Activated CD4-positive, alpha-beta T cell treated with anti-CD3 and anti-CD28 coated beads for 36 hours (primary cell): ENCODE measurements at regions of chr10 and their contacts with region 1.

Region 1: DNA sequence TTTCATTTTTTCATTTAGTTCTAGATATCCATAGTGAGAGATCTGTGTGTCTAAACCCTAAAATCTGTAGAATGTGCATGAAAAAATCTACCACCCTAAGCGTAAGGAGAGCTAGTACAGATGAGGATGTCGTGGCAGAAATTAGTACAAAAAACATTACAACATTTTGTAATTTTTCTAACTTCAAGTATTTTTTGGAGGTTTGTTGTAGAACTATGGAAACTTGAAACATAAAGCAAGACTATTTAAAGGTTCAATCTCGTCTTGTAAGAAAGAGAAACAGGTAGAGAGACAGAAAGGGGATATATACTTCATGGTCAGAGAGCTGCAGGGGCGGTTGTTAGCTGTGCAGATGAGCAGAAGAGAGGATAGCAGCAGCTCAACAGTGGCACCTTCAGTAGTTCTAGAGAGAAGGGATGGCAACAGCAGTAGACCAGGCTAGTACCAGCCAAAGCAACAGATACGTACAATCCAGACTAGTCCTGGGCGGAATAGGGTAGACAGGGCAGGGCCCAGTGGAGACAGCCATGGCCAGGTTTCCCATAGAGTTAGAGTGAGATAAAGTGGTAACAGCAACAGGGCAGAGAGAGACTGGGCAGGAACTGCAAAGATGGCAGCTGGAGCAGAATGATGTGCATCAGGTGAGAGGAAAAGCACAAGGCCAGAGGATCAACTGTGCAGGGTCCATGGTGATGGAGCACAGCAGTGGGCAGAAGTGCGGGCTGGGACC is 145.2 kb downstream of the FRMD4A start:
- DNase-seq: peak; percentile 73
- ATAC-seq: peak; percentile 92
- H3K4me3 Mint-ChIP-seq: peak overlapping the region; percentile 63
- H3K27ac Mint-ChIP-seq: peak overlapping the region; percentile 97
- H3K4me1 Mint-ChIP-seq: peaks cover 31% of the 10 kb centered on the region
- H3K27me3 Mint-ChIP-seq: peaks cover 29% of the 10 kb centered on the region

Region 2: DNA sequence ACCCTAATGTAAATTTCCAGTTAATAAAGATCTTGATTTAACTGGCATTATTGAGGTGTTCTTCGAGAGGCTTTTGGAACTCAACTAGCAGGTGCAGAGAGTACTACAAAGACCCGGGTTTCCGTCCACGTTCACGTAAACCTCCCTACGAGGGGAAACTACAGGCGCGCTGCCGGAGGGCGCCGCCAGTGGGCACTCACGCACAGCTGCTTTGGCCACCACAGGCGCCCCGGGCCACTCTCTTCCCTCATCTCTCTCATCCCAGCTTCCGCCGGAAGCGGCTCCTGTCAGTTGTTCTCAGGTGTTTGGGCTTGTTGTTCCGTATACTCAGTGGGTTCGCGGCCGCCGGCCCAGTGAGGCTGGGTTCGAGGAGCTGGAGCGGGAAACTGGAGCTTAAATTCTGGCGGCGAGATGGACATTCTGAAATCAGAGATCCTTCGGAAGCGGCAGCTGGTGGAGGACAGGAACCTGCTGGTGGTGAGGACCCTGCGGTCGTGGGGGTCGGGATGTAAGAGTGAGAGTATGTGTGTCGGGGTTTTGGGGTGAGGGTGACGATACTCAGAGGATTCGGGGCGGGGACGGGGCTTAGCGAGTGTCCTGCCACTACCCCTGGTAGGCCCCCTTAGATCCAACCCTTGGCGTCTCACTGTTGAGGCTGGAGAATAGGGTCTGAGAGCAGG is 598.7 kb before region 1 on chr10 and contains the start of gene PRPF18:
- CTCF ChIA-PET with region 1: no interaction called
- POLR2A ChIA-PET with region 1: interaction called, 3 read pairs
- intact Hi-C with region 1: loop called in 1 of 2 experiments (anchors 10 kb)
- DNase-seq: peak; percentile 97
- ATAC-seq: peak; percentile 100
- H3K4me3 Mint-ChIP-seq: peak within 1 kb of the TSS; percentile 99
- H3K27ac Mint-ChIP-seq: peak within 1 kb of the TSS; percentile 95
- H3K4me1 Mint-ChIP-seq: peaks cover 29% of the 10 kb centered on the region
- H3K27me3 Mint-ChIP-seq: peaks cover 8% of the 10 kb centered on the region
- total RNA-seq, gene PRPF18: 21.0 to 22.1 TPM

Region 3: GRCh38 chr10:13865758-13866491 is 319.6 kb before region 1 on chr10:
- CTCF ChIA-PET with region 1: no interaction called
- POLR2A ChIA-PET with region 1: no interaction called
- intact Hi-C with region 1: no loop called
- DNase-seq: no peak
- ATAC-seq: no peak
- H3K4me3 Mint-ChIP-seq: no peak overlapping the region
- H3K27ac Mint-ChIP-seq: no peak overlapping the region
- H3K4me1 Mint-ChIP-seq: peaks cover 26% of the 10 kb centered on the region
- H3K27me3 Mint-ChIP-seq: no peaks in the 10 kb centered on the region

Region 4: GRCh38 chr10:14040787-14041631 is 144.5 kb before region 1 on chr10:
- CTCF ChIA-PET with region 1: no interaction called
- POLR2A ChIA-PET with region 1: interaction called, 10 read pairs
- intact Hi-C with region 1: no loop called
- DNase-seq: no peak
- ATAC-seq: peak; percentile 51
- H3K4me3 Mint-ChIP-seq: no peak overlapping the region
- H3K27ac Mint-ChIP-seq: no peak overlapping the region
- H3K4me1 Mint-ChIP-seq: peaks cover 11% of the 10 kb centered on the region
- H3K27me3 Mint-ChIP-seq: no peaks in the 10 kb centered on the region

Region 5: DNA sequence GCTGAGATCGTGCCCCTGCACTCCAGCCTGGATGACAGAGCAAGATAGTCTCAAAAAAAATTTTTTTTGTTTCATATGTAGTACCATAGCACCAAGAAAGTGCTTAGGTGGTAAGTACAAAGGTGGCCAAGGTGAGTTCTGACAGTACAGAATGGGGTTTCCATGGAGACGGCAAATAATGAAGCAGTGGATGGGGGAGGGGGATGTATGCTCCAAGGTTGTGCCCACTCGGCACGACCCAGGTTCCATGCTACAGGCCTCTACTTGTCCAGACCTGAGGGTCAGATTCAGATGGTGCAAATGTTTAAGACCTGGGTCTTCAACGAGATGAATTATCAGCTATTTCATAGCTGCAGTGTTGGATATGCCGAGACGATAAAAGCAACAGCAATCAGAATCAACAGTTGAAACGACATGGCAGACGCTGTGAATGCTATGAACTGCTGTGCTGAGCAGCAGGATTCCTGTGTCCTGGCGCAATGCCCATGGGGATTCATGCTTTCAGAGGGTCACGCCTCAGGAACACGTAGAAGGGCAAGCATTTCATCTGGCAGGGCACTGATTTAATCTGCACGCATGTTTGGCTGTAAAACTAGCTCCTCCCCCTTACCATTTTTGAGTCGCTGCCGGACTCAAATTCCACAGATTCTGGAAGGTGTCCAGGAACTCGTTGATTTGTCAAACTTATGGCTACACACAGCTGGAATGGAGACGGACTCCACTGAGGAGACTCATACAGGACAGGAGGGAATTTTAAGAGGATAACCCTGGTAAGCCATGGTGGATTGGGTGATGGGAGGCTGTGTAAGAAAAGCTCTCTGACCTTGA is 111.2 kb before region 1 on chr10:
- CTCF ChIA-PET with region 1: no interaction called
- POLR2A ChIA-PET with region 1: no interaction called
- intact Hi-C with region 1: no loop called
- DNase-seq: no peak
- ATAC-seq: no peak
- H3K4me3 Mint-ChIP-seq: no peak overlapping the region
- H3K27ac Mint-ChIP-seq: no peak overlapping the region
- H3K4me1 Mint-ChIP-seq: no peaks in the 10 kb centered on the region
- H3K27me3 Mint-ChIP-seq: no peaks in the 10 kb centered on the region

Region 6: DNA sequence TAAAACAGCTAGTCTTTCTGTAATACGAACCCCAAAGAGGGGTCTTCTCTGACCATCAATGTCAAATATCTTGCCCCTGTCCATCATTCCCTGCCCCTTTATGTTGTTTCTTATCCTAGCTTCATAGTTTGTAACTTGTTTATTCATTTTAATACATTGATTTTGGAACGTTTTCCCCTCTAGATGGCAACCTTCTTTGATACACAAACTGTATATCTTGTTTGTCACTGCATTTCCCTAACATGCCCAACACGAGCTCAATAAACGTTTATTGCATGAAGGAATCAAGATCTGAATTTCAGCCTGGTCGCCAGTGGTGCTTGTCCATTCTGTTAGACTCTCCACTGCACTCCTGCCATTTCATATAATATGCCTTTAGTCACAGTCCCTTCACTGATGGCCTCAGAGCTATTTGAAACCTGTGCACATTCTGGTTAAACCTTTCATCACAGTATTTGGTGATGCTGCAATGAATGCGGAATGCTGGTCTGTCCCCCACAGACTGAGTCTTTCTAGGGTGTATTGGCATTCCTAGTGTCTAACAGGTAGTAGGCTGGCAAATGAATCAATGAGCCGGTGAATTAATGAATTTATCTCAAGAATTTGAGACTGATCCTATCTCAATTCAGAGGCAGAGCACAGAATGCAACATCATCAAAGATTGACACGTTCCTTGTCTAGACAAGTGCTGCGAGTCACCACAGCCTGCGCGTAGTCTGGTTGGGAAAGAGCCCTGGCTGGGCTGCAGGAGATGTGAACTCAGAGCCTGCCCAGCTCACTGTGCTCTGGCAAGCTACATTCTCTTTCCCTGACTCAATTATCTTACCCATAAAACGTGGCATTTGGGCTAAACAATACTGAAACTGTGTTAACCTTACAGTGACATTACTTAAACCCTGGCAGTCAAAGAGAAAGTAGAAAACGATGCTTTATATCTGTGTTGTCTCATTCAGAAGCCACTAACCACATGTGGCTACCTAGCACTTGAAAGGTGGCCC is 200.4 kb after region 1 on chr10:
- CTCF ChIA-PET with region 1: no interaction called
- POLR2A ChIA-PET with region 1: interaction called, 9 read pairs
- intact Hi-C with region 1: loop called (anchors 1 kb)
- DNase-seq: peak; percentile 78
- ATAC-seq: peak; percentile 74
- H3K4me3 Mint-ChIP-seq: no peak overlapping the region
- H3K27ac Mint-ChIP-seq: no peak overlapping the region
- H3K4me1 Mint-ChIP-seq: peaks cover 74% of the 10 kb centered on the region
- H3K27me3 Mint-ChIP-seq: peaks cover 13% of the 10 kb centered on the region

Region 7: DNA sequence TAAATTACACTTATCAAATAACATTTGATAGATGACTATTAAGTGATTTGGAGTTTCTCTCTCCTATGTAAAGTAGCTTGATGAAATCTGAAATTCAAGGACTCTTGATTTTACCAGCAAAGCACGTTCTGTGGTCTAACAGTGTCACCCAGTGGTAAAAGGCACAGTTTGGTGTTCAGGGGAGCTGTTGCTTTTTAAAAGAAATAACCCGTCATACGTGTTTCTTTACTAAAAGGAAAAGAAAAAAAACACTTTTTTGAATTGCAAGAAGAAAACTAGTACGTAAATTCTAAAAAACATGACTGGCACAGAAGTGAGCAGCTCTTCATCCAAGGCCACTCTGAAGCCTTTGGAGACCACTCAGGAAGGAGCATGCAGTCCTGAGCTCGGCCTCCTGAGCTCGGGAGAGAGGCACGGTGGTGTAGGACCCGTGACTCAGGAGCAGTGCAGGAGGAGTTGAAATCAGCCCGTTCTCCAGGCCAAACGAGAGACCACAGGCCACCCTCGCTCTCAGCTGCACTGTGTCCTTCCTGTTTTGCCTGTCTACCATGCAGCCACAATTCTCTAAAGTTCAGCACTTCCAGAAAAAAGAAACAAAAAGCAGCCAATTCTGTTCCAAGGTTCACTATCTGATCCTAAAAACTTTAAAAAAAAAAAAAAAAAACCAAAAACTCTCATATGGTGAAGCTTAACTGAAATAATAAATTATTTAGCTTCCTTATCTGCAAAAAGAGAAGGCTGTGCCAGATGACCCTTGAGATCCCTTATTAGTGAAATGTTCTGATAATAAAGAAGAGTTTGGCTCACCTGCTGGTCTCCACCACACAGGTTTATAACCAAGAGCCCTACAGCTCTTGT is 357.8 kb after region 1 on chr10:
- CTCF ChIA-PET with region 1: no interaction called
- POLR2A ChIA-PET with region 1: interaction called, 12 read pairs
- intact Hi-C with region 1: no loop called
- DNase-seq: peak; percentile 60
- ATAC-seq: peak; percentile 81
- H3K4me3 Mint-ChIP-seq: peak overlapping the region; percentile 62
- H3K27ac Mint-ChIP-seq: peak overlapping the region; percentile 90
- H3K4me1 Mint-ChIP-seq: peaks cover 79% of the 10 kb centered on the region
- H3K27me3 Mint-ChIP-seq: no peaks in the 10 kb centered on the region

Region 8: DNA sequence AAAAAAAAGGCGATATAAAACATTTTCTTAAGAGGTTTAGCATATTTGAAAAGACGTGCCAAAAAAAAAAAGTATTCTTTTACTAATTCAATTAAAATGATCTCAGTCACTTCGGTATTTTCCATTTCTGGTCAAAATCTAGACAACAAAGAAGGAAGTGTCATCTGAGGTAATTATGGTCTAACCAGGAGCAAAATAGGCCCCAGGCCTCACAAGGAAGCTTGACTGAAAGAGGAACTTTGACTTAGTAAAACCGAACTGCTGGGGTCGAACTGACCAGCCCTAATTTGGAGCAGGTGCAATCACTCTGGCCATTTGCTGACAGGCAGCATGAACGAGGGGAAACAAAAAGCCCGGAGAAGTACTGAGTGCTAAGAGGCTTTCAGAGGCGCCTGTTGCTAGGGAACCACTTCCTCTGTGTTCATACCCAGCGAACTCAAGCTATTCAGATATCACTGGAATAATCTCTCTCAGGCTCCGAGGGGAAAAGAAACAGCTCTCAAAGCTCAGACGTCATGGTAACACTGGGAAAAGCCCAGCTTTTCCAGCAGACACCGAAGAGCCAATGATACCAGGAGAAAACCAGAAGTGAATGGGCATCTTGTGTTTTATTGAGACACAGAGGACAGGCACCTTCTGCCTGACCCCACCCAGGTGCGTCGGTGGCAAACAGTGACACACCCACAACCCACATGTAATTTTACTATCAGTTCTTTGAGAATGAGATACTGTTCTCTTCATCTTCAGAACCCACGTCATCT is 462.7 kb after region 1 on chr10:
- CTCF ChIA-PET with region 1: no interaction called
- POLR2A ChIA-PET with region 1: interaction called, 10 read pairs
- intact Hi-C with region 1: loop called (anchors 1 to 2 kb)
- DNase-seq: peak; percentile 79
- ATAC-seq: peak; percentile 66
- H3K4me3 Mint-ChIP-seq: peak overlapping the region; percentile 65
- H3K27ac Mint-ChIP-seq: peak overlapping the region; percentile 98
- H3K4me1 Mint-ChIP-seq: peaks cover 85% of the 10 kb centered on the region
- H3K27me3 Mint-ChIP-seq: no peaks in the 10 kb centered on the region

Region 9: DNA sequence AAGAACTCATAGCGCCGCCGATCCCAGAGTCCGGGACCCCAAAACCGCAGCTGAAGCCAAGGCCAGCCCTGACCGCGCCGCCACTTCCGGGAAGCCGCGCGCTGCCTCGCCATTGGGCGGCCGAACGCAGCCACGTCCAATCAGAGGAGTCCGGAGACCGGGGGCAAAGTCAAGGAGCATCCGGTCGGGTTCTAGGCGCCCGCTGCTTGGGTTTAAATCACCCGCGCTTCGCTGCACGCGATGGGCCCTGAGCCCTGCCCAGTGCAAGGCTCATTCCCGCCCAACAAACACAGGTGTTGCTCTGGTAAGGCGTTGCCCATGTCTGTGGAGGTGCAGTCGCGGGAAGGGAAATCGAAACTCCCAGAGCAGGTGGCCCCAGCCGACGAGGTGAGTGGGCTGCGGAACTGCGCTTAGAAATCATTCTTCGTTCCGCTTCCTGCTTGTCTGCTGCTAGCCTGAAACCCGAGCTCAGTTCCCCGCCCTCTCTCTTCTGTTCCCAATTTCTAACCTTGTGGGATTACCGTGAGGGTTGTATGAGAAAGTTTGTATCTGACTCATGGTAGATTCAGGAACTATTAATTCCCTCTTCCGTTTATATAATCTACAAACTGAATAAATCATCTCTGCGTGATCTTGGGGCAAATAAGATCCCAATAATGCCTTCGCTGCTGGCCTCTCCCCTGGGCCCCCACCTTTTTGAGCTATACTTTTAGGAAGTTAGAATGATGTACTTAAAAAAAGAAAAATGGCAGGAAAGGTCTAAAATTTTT is 768.7 kb after region 1 on chr10 and contains the start of gene DCLRE1C:
- CTCF ChIA-PET with region 1: no interaction called
- POLR2A ChIA-PET with region 1: interaction called, 12 read pairs
- intact Hi-C with region 1: loop called in 1 of 2 experiments (anchors 10 kb)
- DNase-seq: peak; percentile 94
- ATAC-seq: peak; percentile 94
- H3K4me3 Mint-ChIP-seq: peak within 1 kb of the TSS; percentile 90
- H3K27ac Mint-ChIP-seq: peak within 1 kb of the TSS; percentile 97
- H3K4me1 Mint-ChIP-seq: peaks cover 52% of the 10 kb centered on the region
- H3K27me3 Mint-ChIP-seq: no peaks in the 10 kb centered on the region
- total RNA-seq, gene DCLRE1C: 17.9 to 30.9 TPM